Right ventricle myocardium inferior (tissue), 1 donor: ENCODE measurements at regions of chr1 and their contacts with region 1.

Region 1: GRCh38 chr1:109984456-109985275 is at the start of gene AHCYL1:
- DNase-seq: peak; percentile 100
- ATAC-seq: peak; percentile 97
- total RNA-seq, gene AHCYL1: 38.4 TPM

Region 2: DNA sequence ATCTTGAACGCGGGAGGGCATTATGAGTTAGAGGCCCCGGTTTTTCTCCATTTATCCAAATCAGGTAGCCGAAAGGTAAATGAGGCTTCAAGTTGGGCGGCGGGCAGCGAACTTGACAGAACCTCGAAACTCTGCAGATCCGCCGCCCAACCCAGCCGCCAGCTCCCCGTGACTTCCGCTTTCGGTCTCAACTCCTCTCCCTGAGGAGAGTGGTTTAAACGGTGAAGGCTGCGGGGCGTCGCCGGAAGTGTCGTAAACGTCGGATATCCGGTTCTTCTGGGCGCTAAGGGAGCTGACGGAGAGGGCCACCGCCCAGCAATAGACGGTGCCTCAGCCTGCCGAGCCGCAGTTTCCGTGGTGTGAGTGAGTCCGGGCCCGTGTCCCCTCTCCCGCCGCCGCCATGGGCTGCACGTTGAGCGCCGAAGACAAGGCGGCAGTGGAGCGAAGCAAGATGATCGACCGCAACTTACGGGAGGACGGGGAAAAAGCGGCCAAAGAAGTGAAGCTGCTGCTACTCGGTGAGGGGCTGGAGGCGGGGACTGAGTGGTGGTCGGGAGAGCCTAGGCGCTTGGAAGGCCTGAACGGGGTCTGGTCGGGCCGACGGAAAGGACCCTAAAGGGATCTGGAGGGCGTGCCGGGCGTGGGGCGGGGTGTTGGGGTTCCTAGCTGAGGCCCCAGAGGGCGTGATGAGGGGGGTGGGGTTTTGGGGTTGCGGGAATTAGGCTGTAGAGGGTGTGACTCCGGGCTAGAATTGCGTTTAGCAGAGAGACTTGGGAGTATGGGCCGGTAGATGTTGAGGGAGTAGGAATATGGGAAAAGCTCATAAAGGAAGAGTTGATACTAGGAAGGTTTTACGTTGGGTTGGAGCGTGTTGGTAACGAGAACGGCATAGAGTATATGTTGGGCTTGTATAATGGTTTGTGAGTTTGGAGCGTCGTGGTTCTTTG is 436.1 kb before region 1 on chr1 and contains the start of gene GNAI3:
- intact Hi-C with region 1: loop called (anchors 1 kb)
- DNase-seq: peak; percentile 97
- ATAC-seq: peak; percentile 97
- total RNA-seq, gene GNAI3: 2.3 TPM

Region 3: GRCh38 chr1:109643385-109644230 is 341.1 kb before region 1 on chr1:
- intact Hi-C with region 1: loop called (anchors 5 kb)
- DNase-seq: peak; percentile 89
- ATAC-seq: peak; percentile 73

Region 4: DNA sequence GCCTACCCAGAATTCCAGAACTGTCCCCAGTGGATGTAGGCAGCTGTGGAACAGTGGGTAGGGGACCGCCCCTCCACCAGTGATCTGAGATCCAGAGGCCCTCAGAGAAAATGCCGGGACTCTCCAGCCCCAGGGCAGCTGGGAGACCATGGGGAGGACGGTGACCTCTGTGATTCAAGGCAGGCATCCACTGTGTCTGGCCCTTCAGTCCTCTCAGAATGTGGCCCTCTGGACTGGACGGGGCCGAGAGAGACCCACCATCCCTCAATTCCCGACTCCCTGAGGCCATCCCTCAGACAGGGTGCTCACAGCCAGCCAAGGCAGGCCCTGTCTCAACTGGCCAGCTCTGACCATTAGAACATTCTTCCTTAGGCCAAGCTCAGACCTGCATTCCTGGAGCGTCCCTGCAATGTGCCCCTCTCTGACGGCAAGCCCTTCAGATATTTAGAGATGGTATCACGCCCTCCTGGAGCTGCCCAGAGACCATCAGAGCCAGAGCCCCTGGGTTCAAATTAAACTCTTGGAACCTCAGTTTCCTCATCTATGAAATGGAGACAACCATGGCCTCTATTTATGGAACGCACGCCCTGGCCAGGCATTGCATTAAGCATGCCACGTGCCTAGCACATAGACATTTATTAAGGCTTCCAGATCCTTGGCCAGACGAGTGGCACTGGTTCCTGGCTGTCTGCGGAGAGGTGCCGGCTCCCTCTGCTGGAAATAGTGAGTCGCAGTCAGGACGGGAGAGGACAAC is 211.3 kb before region 1 on chr1:
- intact Hi-C with region 1: loop called (anchors 1 kb)
- DNase-seq: peak; percentile 88
- ATAC-seq: peak; percentile 89

Region 5: DNA sequence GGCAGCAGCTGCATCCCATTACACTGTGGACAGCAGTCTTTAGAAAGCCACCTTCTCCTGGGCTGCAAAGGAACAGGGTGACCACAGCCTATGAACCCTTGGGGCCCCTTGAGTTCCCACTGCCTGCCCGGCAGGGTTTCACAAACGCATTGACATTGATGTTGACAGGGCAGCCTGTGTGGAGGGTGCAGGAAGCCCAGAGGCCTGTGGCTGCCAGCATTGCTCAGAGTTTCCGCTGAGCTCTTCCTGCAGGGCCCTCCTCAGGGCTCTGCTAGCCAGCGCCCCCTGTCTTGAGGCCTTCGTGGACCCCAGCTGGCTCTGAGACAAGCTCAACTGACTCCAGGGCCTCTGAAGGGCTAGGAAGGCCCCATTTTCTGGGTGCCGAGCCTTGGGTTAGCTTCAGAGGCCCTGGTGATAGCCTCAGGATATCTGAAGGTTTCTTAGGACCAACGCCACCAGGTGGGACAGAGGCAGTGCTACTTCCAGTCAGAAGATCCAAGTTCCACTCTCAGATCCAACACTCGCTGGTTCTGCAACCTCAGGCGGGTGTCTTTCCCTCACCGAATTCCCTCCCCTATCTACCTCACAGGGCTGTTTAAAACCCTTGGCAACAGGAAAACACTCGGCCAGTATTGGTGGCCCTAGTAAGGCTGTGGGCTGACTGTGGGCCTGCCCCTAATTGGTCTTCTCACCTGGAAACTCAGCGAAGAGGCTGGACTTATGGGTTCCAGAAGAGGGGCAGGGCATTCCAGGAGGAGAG is 193.8 kb before region 1 on chr1:
- intact Hi-C with region 1: loop called (anchors 1 kb)
- DNase-seq: no peak
- ATAC-seq: peak; percentile 41

Region 6: GRCh38 chr1:109910123-109910962 is 74.3 kb before region 1 on chr1 and contains the start of gene CSF1:
- intact Hi-C with region 1: loop called (anchors 5 kb)
- DNase-seq: peak; percentile 89
- ATAC-seq: peak; percentile 82
- total RNA-seq, gene CSF1: 19.0 TPM

Region 7: GRCh38 chr1:109927911-109928321 is 56.8 kb before region 1 on chr1:
- intact Hi-C with region 1: loop called (anchors 2 kb)
- DNase-seq: peak; percentile 86
- ATAC-seq: peak; percentile 73